Activated CD4-positive, alpha-beta T cell treated with anti-CD3 and anti-CD28 coated beads, Interleukin-2, amount 10 ng/mL, durations not matched to agents 7 days and 5 days (primary cell): ENCODE measurements at regions of chr1 and their contacts with region 1.

Region 1: GRCh38 chr1:204806943-204807687 is 63.5 kb upstream of the NFASC start:
- DNase-seq: peak; percentile 88
- H3K4me3 Mint-ChIP-seq: peak overlapping the region; percentile 74
- H3K27ac Mint-ChIP-seq: peak overlapping the region; percentile 78
- H3K4me1 Mint-ChIP-seq: peaks cover 22% of the 10 kb centered on the region
- H3K27me3 Mint-ChIP-seq: peaks cover 3% of the 10 kb centered on the region

Region 2: DNA sequence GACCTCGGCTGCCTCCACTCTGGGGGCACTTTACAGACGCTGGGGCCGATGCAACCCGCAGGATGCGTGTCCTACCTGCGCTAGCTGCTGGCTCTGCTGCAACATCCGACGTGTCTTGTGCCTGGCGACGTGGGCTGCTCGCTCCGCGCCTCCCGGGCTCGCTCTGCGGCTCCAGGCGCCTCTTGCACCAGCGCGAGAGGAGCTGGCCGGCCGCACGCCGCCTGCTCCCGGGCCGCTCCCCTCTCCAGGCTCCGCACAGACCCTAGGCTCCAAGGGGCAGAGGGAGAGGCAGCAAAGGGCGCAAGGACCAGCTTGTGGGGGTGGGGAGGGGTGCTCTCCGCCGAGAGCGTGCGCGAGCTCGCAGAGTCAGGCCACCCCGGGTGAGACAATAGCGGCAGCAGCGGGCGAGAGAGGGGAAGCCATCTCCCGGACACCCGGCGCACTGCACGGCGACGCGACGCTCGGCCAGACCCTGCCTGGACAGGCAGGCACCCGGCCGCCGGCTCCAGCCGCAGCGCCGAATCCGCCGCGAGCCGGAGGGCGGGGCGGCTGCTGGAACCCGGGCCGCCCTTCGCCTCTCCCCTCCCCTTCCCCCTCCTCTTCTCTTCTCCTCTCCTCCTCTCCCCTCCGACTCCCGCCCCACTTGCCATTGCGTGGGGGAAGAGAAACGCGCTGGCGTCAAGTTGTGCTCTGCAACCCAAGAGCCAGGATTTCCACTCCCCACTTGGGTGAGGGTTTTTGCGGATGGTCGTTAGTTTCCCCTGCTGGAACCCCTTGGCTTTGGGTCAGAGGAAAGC is 312.6 kb before region 1 on chr1 and contains the start of gene PIK3C2B:
- CTCF ChIA-PET with region 1: interaction called, 10 read pairs
- POLR2A ChIA-PET with region 1: no interaction called
- DNase-seq: peak; percentile 76
- H3K4me3 Mint-ChIP-seq: peak within 1 kb of the TSS; percentile 88
- H3K27ac Mint-ChIP-seq: peak within 1 kb of the TSS; percentile 89
- H3K4me1 Mint-ChIP-seq: peaks cover 65% of the 10 kb centered on the region
- H3K27me3 Mint-ChIP-seq: no peaks in the 10 kb centered on the region
- total RNA-seq, gene PIK3C2B: 27.4 to 28.9 TPM

Region 3: DNA sequence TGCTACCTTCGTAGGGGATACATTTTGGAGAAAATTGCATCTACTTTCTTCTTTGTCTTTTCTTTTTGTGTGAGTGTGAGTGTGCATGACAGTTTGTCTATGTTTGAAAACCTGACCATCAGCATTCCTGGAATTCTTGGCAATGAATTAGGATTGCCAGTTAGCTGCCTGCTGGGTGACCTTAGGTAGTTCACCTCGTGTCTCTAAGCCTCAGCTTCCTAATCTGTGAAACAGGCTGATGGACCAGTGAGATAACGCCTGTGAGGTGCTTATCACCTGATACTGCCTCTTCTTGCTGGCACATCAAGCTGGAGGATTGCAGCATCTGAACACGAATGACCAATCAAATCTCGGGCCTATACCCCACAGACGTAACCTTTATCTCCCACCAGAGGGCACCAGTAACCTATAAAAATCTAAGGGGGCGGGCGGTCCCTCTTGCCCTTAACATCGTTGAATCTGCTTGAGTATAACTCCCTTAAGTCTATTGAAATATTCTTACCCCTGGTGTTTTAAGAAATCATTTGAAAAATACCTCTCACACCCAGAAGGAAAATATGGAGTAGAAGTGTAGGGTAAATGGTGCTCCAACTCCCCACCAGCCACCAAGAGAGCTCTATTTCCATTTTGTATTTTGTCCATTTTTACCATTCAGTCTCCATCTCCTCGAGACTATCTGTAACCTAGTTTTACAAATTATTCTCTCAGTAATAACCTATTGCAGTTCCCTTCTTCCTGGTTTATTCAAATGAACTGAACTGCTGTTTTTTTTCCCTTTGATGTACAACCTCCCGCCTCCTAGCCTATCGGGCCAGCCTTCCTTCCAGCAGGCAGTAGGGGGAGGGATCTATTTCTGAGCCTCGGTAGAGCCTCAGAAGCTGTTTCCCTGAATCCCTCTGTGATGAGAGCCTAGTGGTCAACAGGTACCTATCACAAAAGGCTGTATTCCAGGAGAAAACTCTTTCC is 241.2 kb before region 1 on chr1:
- CTCF ChIA-PET with region 1: interaction called, 29 read pairs
- POLR2A ChIA-PET with region 1: no interaction called
- DNase-seq: peak; percentile 75
- H3K4me3 Mint-ChIP-seq: no peak overlapping the region
- H3K27ac Mint-ChIP-seq: peak overlapping the region; percentile 63
- H3K4me1 Mint-ChIP-seq: peaks cover 68% of the 10 kb centered on the region
- H3K27me3 Mint-ChIP-seq: no peaks in the 10 kb centered on the region

Region 4: DNA sequence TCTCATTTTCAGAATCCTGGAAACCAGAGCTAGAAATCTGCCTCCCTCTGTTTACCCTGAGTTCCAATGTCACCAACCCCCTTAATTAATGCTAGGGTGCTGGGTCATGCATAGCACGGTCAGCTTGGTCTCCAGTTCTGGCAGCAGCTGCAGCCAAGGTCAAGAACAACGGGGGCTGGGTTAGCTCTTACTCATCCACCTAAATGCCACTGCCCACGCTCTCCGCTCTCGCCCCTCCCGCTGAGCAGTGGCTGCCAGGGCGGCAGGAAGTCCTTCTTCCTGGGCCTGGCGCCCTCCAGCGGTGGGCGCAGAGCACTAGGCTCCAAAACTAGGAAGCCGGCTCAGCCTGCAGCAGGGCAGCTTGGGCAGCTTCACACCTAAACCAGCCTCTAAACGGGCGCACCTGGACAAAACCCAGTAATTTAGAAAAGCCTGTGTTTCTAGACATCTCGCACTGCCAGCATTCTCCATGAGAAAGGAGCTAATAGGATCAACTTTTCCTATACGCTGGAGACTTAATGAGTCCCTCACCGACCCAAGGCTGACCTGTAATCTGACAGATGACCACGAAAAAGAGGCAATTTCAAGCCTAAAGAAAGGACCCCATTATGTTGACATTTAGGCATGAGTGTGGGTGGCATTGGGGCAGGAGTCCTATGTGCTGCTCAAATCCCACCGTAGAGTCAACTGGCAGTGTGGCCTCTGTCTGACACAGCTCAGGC is 43.2 kb before region 1 on chr1:
- CTCF ChIA-PET with region 1: interaction called, 14 read pairs
- POLR2A ChIA-PET with region 1: no interaction called
- DNase-seq: peak; percentile 74
- H3K4me3 Mint-ChIP-seq: peak overlapping the region; percentile 20
- H3K27ac Mint-ChIP-seq: peak overlapping the region; percentile 6
- H3K4me1 Mint-ChIP-seq: peaks cover 8% of the 10 kb centered on the region
- H3K27me3 Mint-ChIP-seq: peaks cover 42% of the 10 kb centered on the region

Region 5: GRCh38 chr1:204791453-204792353 is 15.4 kb before region 1 on chr1:
- CTCF ChIA-PET with region 1: interaction called, 49 read pairs
- POLR2A ChIA-PET with region 1: no interaction called
- DNase-seq: peak; percentile 87
- H3K4me3 Mint-ChIP-seq: no peak overlapping the region
- H3K27ac Mint-ChIP-seq: no peak overlapping the region
- H3K4me1 Mint-ChIP-seq: peaks cover 9% of the 10 kb centered on the region
- H3K27me3 Mint-ChIP-seq: peaks cover 27% of the 10 kb centered on the region